ENCODE measurements at regions of chr1 and their contacts with region 1.

Region 1: GRCh38 chr1:6393400-6394187 is at the start of gene ACOT7:
- DNase-seq: peak; percentile 93
- H3K4me3 Mint-ChIP-seq: peak within 1 kb of the TSS; percentile 84
- H3K27ac Mint-ChIP-seq: peak within 1 kb of the TSS; percentile 88
- H3K4me1 Mint-ChIP-seq: peaks cover 20% of the 10 kb centered on the region
- H3K27me3 Mint-ChIP-seq: no peaks in the 10 kb centered on the region
- total RNA-seq, gene ACOT7: 93.8 to 94.6 TPM

Region 2: GRCh38 chr1:5992026-5992813 is 401.4 kb before region 1 on chr1 and contains the start of gene NPHP4:
- CTCF ChIA-PET with region 1: no interaction called
- POLR2A ChIA-PET with region 1: no interaction called
- intact Hi-C with region 1: loop called (anchors 5 kb)
- DNase-seq: peak; percentile 100
- H3K4me3 Mint-ChIP-seq: peak within 1 kb of the TSS; percentile 86
- H3K27ac Mint-ChIP-seq: peak within 1 kb of the TSS; percentile 88
- H3K4me1 Mint-ChIP-seq: peaks cover 21% of the 10 kb centered on the region
- H3K27me3 Mint-ChIP-seq: no peaks in the 10 kb centered on the region
- total RNA-seq, gene NPHP4: 14.0 to 14.6 TPM

Region 3: GRCh38 chr1:6026095-6026809 is 367.3 kb before region 1 on chr1:
- CTCF ChIA-PET with region 1: no interaction called
- POLR2A ChIA-PET with region 1: no interaction called
- intact Hi-C with region 1: loop called (anchors 2 kb)
- DNase-seq: peak; percentile 97
- H3K4me3 Mint-ChIP-seq: peak overlapping the region; percentile 96
- H3K27ac Mint-ChIP-seq: peak overlapping the region; percentile 97
- H3K4me1 Mint-ChIP-seq: peaks cover 43% of the 10 kb centered on the region
- H3K27me3 Mint-ChIP-seq: no peaks in the 10 kb centered on the region

Region 4: DNA sequence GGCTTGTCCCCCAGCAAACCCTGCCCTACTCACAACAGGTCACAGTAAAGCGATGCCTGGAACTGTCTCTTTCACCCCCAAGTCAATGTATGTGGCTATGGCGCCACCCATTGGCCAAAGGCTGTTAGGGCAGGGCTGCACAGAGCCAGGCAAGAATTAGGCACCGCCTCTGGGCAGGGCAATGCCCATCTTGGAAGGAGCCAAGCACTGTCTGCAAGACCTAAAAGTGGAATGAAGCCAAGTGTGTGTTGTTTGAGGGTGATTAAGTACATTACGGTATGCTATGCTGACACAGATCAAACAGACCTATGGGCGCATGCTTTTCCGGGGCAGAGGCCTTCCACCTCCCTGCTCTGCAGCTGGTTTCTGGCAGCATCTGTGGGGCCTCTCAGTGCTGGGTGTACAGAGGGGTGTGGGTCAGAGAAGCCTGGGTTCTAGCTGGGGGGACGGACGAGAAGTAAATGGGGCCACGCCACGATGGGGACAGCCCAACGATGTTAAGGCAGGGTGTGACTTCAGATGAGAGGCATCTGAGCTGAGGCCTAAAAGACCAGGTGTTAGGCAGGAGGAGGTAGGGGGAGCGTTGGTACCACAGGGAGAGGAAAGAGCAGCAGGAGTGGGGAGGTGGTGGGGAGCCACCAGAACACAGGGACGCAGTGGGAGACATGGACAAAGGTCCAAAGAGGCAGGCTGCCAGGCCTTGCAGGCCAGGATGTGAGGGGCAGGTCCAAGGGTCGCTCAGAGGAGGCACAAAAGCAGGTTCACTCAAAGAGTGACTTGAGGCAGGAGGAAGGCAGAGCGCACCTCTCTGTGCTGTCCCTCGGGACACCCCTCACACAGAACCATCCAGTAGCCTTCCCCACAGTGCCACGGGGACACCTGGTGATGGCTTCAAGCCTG is 49.8 kb before region 1 on chr1:
- CTCF ChIA-PET with region 1: interaction called, 23 read pairs
- POLR2A ChIA-PET with region 1: interaction called, 4 read pairs
- intact Hi-C with region 1: loop called (anchors 1 kb)
- DNase-seq: peak; percentile 76
- H3K4me3 Mint-ChIP-seq: no peak overlapping the region
- H3K27ac Mint-ChIP-seq: no peak overlapping the region
- H3K4me1 Mint-ChIP-seq: peaks cover 10% of the 10 kb centered on the region
- H3K27me3 Mint-ChIP-seq: no peaks in the 10 kb centered on the region

Region 5: DNA sequence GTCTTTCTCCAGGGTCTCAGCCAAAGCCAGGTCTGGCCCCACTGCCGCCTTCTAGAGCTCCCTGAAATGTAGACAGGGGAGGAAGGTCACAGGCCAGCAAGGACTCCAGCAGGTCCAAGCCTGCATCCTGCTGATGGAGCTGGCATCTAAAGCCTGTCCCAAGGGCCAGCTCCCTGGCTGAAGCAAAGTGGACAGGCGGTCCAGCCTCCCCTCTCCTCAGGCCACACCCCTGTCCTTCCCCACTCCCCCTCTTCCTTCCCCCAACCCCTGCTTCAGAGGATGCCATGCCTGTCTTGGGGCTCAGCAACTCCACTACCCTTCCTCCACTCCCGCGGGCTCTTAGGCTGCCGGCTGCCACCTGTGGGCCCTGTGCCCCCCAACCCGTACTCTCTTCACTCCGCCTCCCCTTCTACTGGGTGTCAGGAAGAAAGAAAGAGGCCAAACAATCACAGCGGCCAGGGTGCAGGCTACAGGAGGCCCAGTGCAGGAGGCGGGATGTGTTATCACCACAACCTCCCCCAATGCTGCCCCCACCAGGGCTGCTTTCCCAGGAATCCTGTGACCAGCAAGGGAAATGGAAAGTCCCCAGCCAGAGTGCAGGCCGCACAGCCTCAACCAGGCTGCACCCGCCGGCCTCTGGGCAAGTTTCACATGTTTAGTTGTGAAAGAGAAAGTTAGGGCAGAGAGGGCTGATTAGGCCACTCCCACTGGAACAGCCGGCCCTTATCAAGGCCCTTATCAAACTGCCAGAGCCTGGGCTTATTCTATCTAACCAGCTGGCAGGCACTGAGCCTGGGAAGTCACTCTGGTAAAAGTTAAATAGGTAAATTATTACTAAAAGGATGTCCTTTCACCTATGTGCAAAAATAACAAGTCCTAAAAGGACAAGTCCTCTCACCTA is 34.1 kb before region 1 on chr1:
- CTCF ChIA-PET with region 1: interaction called, 47 read pairs
- POLR2A ChIA-PET with region 1: interaction called, 34 read pairs
- intact Hi-C with region 1: loop called (anchors 1 kb)
- DNase-seq: peak; percentile 74
- H3K4me3 Mint-ChIP-seq: peak overlapping the region; percentile 55
- H3K27ac Mint-ChIP-seq: peak overlapping the region; percentile 90
- H3K4me1 Mint-ChIP-seq: peaks cover 42% of the 10 kb centered on the region
- H3K27me3 Mint-ChIP-seq: no peaks in the 10 kb centered on the region

Region 6: GRCh38 chr1:6414443-6414844 is 20.9 kb after region 1 on chr1:
- CTCF ChIA-PET with region 1: interaction called, 12 read pairs
- POLR2A ChIA-PET with region 1: interaction called, 3 read pairs
- intact Hi-C with region 1: no loop called
- DNase-seq: peak; percentile 66
- H3K4me3 Mint-ChIP-seq: no peak overlapping the region
- H3K27ac Mint-ChIP-seq: no peak overlapping the region
- H3K4me1 Mint-ChIP-seq: peaks cover 8% of the 10 kb centered on the region
- H3K27me3 Mint-ChIP-seq: peaks cover 50% of the 10 kb centered on the region

Region 7: GRCh38 chr1:6922096-6922931 is 528.7 kb after region 1 on chr1:
- CTCF ChIA-PET with region 1: no interaction called
- POLR2A ChIA-PET with region 1: no interaction called
- intact Hi-C with region 1: no loop called
- DNase-seq: no peak
- H3K4me3 Mint-ChIP-seq: no peak overlapping the region
- H3K27ac Mint-ChIP-seq: no peak overlapping the region
- H3K4me1 Mint-ChIP-seq: no peaks in the 10 kb centered on the region
- H3K27me3 Mint-ChIP-seq: peaks cover 3% of the 10 kb centered on the region

Measured in activated CD4-positive, alpha-beta memory T cell treated with anti-CD3 and anti-CD28 coated beads for 36 hours (primary cell).